ENCODE measurements at regions of chr12 and their contacts with region 1.

Region 1: DNA sequence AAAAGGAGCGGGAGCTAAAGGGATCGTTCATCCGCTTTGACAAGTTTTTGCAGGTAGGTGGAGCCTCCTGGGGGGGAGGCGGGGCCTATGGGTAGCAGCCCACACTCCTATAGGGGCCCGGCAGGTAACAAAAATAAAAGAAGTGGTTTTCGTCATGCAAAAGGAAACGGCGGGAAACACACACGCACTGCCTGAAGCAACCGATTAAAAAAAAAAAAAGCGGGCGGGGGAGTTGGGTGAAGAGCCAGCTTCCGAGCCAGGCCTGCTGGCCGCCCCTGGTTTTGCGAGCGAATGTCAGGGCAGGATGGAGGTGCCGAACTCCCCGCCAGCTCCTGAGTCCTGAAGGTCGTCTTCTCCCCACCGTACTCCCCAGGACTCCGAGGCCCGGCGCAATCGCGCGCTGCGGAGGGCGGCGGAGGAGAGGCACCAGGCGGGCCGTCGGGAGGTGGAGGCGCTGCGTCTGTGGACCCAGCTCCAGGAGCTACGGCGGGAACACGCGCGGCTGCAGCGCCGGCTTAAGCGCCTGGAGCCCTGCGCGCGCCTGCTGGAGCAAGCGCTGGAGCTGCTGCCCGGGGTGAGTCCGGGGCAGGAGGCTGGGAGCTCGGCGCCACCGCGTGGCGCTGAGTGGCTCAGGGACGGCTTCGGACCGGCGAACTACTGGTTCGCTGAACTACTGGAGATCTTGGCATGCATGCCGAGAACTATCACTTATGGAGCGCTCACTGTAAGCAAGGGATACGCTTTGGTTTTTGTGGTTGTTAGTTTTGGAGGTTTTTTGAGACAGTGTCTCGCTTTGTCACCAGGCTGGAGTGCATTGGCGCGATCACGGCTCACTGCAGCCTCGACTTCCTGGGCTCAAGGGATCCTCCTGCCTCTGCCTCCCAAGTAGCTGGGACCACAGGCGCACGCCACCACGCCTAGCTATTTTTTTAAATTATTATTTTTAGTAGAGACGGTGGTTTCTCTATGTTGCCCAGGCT is 3.6 kb downstream of the CFAP73 start:
- DNase-seq: peak; percentile 84
- CTCF ChIP-seq: peak; percentile 56

Region 2: DNA sequence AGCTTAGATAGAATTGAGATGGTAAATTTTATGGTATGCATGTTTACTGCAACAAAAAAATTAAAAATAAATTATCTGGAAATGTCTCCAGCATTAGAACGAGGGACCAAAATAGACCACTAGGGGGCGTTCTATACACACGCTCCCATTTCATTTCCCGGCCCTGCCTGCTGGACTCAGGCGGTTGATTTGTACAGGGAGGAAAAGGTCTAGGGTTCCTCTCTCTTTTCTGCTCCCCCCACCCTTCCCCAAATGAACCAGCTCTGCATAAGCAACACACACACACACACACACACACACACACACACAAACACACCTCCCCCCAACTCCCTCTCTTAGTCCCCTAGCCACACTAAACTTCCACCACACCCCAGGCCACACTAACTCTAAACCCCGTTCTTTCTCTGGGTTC is 104.4 kb before region 1 on chr12:
- CTCF ChIA-PET with region 1: interaction called, 20 read pairs
- POLR2A ChIA-PET with region 1: no interaction called
- DNase-seq: peak; percentile 76
- CTCF ChIP-seq: peak; percentile 57

Region 3: GRCh38 chr12:113135178-113136127 is 17.7 kb before region 1 on chr12 and contains the start of gene RASAL1:
- CTCF ChIA-PET with region 1: interaction called, 41 read pairs
- POLR2A ChIA-PET with region 1: no interaction called
- DNase-seq: peak; percentile 81
- CTCF ChIP-seq: peak; percentile 59

Region 4: GRCh38 chr12:113165521-113166450 is 12.7 kb after region 1 on chr12:
- CTCF ChIA-PET with region 1: interaction called, 190 read pairs
- POLR2A ChIA-PET with region 1: no interaction called
- DNase-seq: no peak
- CTCF ChIP-seq: no peak

Measured in GM10248 (cell line).